Esophagus muscularis mucosa (tissue), 4 donors: ENCODE measurements at regions of chr1 and their contacts with region 1.

Region 1: DNA sequence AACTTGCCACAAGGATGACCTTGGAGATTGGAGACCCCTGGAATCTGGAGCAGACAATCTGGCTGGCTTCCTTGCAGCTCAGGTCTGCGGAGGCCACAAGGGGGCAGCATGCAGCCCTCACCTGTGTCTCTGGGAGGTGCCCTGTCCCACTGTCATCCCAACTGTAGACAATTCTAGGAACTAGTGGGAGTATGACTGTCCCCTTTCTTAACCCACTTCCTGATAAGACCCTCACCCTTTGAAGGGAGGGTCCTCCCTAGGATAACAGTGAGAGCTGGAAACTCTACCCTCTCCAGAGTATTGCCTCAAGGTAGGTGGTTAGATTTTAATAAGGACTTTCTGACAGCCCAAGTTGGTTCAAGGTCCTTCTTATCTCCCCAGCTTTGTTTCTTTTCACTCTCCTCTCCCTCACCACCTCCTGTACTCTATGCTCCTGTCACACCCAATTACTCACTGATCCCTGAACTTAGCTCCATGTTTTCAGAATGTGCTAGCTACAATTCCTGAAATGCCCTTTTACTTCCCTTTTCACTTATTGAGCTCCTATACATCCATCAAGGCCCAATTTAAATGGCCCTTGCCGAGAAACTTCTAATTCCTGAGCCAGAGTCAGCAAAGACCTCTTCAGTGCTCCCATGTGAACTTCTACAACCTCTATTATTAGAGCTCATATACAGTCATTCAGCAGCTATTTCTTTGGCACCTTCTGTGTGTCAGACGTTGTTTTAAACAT is 9.2 kb upstream of the KCNQ4 start:
- DNase-seq: no peak
- H3K4me3 ChIP-seq: no peak overlapping the region
- H3K27ac ChIP-seq: peak overlapping the region in 2 of 4 donors; percentile 10 to 46
- H3K4me1 ChIP-seq: peaks cover under 1 to 26% (median 24%) of the 10 kb centered on the region in 4 donors
- H3K27me3 ChIP-seq: no peaks in the 10 kb centered on the region
- CTCF ChIP-seq: peak; percentile 78 to 87 (median 82)
- EP300 ChIP-seq: no peak
- POLR2A ChIP-seq: no peak

Region 2: GRCh38 chr1:40612345-40612831 is 162.0 kb before region 1 on chr1:
- intact Hi-C with region 1: loop called (anchors 10 kb)
- DNase-seq: no peak
- H3K4me3 ChIP-seq: no peak overlapping the region
- H3K27ac ChIP-seq: no peak overlapping the region
- H3K4me1 ChIP-seq: peaks cover 0 to 5% (median 4%) of the 10 kb centered on the region in 4 donors
- H3K27me3 ChIP-seq: no peaks in the 10 kb centered on the region
- CTCF ChIP-seq: peak; percentile 71 to 81 (median 81)
- EP300 ChIP-seq: no peak
- POLR2A ChIP-seq: no peak

Region 3: DNA sequence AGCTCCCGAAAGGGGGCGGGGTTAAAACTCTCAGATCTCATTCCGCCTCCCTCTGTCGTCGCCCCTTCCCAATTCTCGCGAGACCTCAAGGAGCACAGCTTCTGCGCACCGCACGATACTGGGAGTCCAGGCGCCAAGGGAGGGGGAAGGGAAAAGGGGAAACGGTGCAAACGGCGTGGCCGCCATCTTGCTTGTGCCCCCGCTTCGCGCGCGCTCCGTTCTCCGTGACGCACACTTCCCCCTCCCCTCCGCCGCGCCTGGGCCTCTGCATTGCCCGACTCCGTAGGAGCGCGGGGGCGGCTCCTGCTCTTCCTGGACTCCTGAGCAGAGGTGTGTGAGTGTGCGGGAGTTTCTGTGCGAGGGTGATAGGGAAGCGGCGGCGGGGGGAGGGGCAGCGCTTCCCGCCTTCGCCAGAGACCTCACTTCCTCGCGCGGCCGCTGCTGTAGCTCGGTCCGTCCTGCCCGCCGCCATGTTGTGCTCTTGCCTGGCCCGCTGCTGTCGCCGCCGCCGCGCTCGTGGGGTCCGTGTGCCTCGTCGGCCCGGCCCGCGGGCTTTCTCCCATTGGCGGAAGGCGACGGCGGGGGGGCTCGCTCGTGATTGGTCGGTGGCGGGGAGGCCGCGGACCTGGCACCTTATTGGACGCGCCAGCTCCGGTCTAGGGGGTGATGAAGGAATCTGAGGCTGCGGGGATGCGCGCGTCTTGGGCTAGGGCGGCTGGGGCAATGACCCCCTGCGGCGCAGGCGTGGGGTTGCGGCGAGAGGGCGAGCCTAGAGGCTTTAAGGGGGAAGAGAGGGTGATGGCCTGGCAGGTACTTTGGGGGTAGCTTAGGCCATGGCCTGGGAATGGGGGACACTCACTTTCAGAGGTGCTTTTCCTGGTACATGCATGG is 82.6 kb before region 1 on chr1 and contains the start of gene NFYC:
- intact Hi-C with region 1: loop called (anchors 5 kb)
- DNase-seq: peak; percentile 99
- H3K4me3 ChIP-seq: peak within 1 kb of the TSS; percentile 80 to 98 (median 92)
- H3K27ac ChIP-seq: peak within 1 kb of the TSS; percentile 99 to 100 (median 100)
- H3K4me1 ChIP-seq: peaks cover 17 to 56% (median 50%) of the 10 kb centered on the region in 4 donors
- H3K27me3 ChIP-seq: no peaks in the 10 kb centered on the region
- CTCF ChIP-seq: peak in 1 of 3 experiments; percentile 21
- EP300 ChIP-seq: no peak
- POLR2A ChIP-seq: peak; percentile 95
- total RNA-seq, gene NFYC: 30.0 to 54.2 (median 46.6) TPM

Region 4: DNA sequence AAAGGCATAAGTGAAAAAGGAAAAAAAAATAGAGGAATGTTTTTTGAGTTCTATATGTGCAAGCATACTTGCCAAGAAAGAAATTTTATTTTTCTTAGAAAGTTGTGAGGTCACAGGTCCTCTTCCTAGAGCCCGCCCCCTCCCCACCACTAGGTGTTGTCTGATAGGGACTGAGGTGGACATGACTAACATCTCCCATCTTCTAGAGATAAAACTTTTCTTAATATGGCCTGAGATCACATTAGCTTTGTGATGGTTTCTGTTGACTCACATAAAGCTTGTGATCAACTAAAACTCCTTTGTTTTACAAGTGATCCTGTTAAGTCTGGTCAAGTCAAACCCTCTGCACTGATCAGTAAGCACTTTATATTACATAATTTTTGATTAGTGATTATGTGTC is 121.2 kb after region 1 on chr1:
- intact Hi-C with region 1: no loop called
- DNase-seq: no peak
- H3K4me3 ChIP-seq: no peak overlapping the region
- H3K27ac ChIP-seq: no peak overlapping the region
- H3K4me1 ChIP-seq: peaks cover 0 to 11% (median 9%) of the 10 kb centered on the region in 4 donors
- H3K27me3 ChIP-seq: no peaks in the 10 kb centered on the region
- CTCF ChIP-seq: no peak
- EP300 ChIP-seq: no peak
- POLR2A ChIP-seq: no peak